Activated B cell treated with CpG ODN at 0.5 μM for 24 hours (primary cell): ENCODE measurements at regions of chr2 and their contacts with region 1.

Region 1: DNA sequence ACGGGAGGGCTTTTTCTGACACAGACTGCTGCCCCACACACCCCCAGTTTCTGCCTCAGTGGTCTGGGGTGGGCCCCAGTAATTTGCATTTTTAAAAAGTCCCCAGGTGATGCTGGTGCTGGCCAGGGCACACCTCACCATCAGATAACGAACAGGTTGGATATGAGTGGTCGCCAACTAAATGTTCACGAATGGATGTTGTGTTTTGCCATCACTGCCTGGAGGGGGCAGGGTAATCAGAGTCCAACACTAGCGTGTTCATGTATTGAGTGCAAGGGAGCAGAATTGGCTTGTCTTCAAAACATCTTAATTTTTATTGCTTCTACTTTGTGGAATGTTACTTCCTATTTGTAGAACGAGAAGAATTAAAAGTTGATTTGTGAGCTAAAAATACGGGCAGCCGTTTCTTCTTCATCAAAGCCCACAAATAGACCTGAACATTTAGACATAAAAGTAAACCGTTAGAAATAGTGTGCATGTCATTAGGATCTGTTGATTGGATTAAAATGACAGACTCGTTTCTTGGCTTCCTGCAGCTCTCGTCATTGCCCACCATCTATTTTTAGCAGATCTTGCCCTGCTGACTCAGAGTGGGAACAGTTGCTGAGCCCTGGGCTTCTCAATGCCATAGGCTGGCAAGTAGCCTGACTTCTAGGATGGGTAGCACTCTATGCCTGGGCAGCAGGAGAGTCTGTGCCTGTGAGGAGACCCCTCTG is 45.2 kb downstream of the NCK2 start:
- DNase-seq: no peak
- ATAC-seq: peak; percentile 81
- H3K4me3 Mint-ChIP-seq: peak overlapping the region; percentile 64
- H3K27ac Mint-ChIP-seq: peak overlapping the region; percentile 84
- H3K4me1 Mint-ChIP-seq: peaks cover 90% of the 10 kb centered on the region
- H3K27me3 Mint-ChIP-seq: no peaks in the 10 kb centered on the region
- CTCF ChIP-seq: no peak

Region 2: DNA sequence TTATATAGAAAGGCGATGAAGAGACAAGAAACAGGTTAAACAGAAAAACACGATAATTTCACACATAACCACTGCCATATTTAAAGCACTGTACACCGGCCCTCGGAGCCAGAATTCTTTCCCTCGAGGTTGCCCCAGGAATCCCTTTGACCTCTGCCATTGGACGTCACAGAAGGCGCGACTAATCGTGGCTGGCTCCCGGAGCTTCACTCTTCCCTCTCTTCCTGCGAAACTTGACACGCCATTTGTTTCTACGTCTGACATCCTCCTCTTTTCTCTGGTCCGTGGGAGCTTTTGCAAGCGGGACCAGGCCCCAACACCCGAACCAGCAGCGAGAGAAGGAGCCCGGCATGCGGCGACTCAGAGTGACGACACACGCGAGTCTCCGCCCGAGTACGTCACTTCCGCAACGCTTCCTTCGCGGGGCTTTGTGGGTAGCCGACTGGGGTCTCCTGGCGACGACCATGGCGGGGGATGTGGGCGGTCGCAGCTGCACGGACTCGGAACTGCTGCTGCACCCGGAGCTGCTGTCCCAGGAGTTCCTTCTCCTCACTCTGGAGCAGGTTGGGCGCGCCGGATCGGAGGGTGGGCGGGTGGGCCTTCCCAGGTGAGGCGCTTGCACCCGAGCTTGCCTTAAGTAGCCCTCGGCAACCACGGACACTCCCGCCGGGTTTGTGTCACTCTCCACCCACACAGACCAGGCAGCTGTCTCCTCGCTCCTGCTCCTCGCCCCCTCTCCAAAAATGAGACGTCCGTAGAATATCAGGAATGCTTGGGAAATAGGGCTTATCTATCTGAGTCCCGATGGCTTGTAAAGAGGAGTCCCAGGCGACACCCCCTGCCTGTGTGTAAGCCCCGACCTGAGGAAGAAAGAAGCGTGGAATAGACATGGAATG is 452.5 kb before region 1 on chr2 and contains the start of gene C2orf49:
- CTCF ChIA-PET with region 1: interaction called, 3 read pairs
- POLR2A ChIA-PET with region 1: no interaction called
- intact Hi-C with region 1: loop called (anchors 10 kb)
- DNase-seq: peak; percentile 89
- ATAC-seq: peak; percentile 93
- H3K4me3 Mint-ChIP-seq: peak within 1 kb of the TSS; percentile 100
- H3K27ac Mint-ChIP-seq: peak within 1 kb of the TSS; percentile 100
- H3K4me1 Mint-ChIP-seq: peaks cover 32% of the 10 kb centered on the region
- H3K27me3 Mint-ChIP-seq: no peaks in the 10 kb centered on the region
- CTCF ChIP-seq: no peak
- total RNA-seq, gene C2orf49: 20.0 and 23.8 TPM in 2 replicates

Region 3: GRCh38 chr2:105763076-105763475 is 26.8 kb before region 1 on chr2:
- CTCF ChIA-PET with region 1: no interaction called
- POLR2A ChIA-PET with region 1: no interaction called
- intact Hi-C with region 1: no loop called
- DNase-seq: no peak
- ATAC-seq: no peak
- H3K4me3 Mint-ChIP-seq: no peak overlapping the region
- H3K27ac Mint-ChIP-seq: no peak overlapping the region
- H3K4me1 Mint-ChIP-seq: peaks cover 67% of the 10 kb centered on the region
- H3K27me3 Mint-ChIP-seq: no peaks in the 10 kb centered on the region
- CTCF ChIP-seq: no peak

Region 4: GRCh38 chr2:106065268-106065982 is 275.5 kb after region 1 on chr2:
- CTCF ChIA-PET with region 1: no interaction called
- POLR2A ChIA-PET with region 1: no interaction called
- intact Hi-C with region 1: no loop called
- DNase-seq: no peak
- ATAC-seq: no peak
- H3K4me3 Mint-ChIP-seq: peak overlapping the region; percentile 44
- H3K27ac Mint-ChIP-seq: no peak overlapping the region
- H3K4me1 Mint-ChIP-seq: peaks cover 10% of the 10 kb centered on the region
- H3K27me3 Mint-ChIP-seq: peaks cover 41% of the 10 kb centered on the region
- CTCF ChIP-seq: no peak

Region 5: GRCh38 chr2:106098081-106098480 is 308.2 kb after region 1 on chr2:
- CTCF ChIA-PET with region 1: no interaction called
- POLR2A ChIA-PET with region 1: no interaction called
- intact Hi-C with region 1: loop called (anchors 5 kb)
- DNase-seq: no peak
- ATAC-seq: no peak
- H3K4me3 Mint-ChIP-seq: no peak overlapping the region
- H3K27ac Mint-ChIP-seq: no peak overlapping the region
- H3K4me1 Mint-ChIP-seq: peaks cover 28% of the 10 kb centered on the region
- H3K27me3 Mint-ChIP-seq: no peaks in the 10 kb centered on the region
- CTCF ChIP-seq: no peak